ENCODE measurements at regions of chrX and their contacts with region 1.

Region 1: DNA sequence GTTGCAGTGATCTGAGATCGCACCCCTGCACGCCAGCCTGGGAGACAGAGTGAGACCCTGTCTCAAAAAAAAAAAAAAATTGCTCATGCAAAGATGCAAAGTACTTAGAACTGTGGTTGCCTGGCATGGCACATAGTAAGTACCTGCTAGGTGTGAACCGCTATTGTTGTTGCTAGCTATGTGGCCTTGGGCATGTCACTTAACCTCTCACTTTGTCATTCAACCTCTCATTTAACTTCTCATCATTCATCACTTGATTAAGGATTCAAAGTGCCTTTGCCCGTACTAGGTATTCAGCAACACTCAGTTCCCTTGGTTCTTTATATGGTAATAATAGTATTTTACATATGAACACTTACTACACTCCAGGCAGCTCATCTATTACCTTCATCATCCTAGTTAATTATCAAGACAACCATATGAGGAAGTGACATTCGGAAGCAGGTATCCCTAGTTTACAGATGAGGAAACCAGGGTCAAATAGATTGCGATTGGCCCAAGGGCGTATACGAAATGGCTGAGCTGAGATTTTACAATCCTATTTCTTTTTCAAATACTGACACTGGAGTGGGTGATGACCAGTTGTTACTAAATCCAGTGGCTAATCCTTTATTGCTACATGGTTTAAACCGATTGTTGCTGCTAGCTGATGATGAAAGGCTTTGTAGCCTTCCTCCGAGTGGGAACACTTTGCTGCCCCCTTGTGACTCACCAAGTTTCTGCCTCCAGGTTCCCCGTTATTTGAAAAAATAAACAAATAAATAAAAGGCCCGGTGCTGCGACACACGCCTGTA is 28.8 kb upstream of the SOWAHD start:
- DNase-seq: peak; percentile 24
- H3K4me3 ChIP-seq: no peak overlapping the region
- H3K27ac ChIP-seq: no peak overlapping the region
- H3K27me3 ChIP-seq: no peaks in the 10 kb centered on the region
- CTCF ChIP-seq: peak; percentile 64

Region 2: DNA sequence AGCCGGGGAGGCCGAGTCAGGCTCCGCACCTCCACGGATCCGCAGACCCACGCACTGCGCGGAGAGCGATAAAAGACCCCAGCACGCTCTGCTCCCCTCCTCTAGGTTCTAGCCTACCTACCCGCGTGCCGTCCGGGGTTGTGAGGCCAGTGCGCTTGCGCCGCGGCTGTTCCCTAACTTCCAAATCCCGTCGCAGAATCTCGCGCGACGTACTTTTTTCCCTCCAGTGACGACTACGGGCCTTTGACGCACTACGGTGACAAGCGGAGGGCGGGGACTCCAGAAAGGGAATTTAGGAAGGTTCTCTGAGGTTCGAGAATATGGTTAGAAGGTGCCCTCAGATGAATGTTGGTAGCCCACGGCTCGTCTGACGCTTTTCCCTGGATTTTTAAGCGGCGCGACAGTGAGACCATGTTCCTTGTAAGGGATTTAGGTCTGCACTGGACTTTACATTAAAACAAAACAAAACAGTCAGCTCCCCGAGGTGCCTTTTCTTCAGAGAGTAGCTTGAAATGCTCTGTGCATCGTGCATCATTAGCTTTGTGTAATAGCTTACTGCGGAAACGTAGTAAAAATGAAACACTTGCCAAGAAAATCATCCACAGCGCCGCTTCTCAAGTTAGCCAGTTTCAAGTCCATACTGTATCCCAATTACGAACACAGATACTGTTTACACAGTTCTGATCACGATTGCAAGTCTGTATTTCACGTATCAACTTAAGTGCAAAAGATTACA is 123.2 kb before region 1 on chrX and contains the start of gene NKRF:
- CTCF ChIA-PET with region 1: interaction called, 13 read pairs
- POLR2A ChIA-PET with region 1: no interaction called
- DNase-seq: peak; percentile 75
- H3K4me3 ChIP-seq: peak within 1 kb of the TSS; percentile 90
- H3K27ac ChIP-seq: peak within 1 kb of the TSS; percentile 85
- H3K27me3 ChIP-seq: no peaks in the 10 kb centered on the region
- CTCF ChIP-seq: no peak
- polyA plus RNA-seq, gene NKRF: 5.0 and 6.4 TPM in 2 replicates

Region 3: DNA sequence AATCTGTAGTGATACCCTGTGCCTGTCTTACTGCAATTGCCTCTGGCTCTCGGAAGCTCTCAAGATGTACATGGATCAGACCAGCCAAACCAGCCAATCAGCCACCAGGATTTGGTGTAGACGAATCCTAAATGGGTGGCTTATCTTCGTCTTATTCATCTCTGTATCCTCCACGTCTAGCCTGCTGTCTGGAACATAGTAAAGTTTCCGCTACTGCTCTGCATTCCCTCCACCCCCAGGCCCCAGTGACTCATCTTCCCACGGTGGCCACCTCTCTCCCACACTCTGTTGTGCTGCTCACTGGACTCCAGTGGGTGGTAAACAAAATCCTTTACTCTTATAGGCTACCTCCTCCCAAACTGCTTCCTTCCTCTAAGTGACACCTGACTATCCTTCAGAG is 74.5 kb before region 1 on chrX:
- CTCF ChIA-PET with region 1: interaction called, 10 read pairs
- POLR2A ChIA-PET with region 1: no interaction called
- DNase-seq: peak; percentile 29
- H3K4me3 ChIP-seq: no peak overlapping the region
- H3K27ac ChIP-seq: no peak overlapping the region
- H3K27me3 ChIP-seq: no peaks in the 10 kb centered on the region
- CTCF ChIP-seq: no peak

Region 4: DNA sequence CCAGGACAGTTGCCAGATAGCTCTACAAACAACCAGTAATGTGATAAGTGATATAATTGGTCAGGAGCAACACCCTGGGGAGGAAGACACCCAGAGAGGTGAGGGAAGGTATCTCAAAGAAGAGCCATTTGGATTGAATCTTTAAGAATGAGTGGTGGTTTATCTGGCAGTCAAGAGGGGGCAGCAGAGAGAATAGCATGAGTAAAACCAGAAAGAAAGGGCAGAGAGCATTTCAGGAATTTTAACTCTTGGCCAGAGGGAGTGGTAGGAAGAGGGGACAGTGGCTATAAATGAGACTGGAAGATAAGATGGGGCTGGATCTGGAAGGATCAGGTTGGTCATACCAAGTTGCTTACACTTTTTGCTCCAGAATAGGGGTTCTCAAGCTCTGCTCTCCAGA is 30.8 kb before region 1 on chrX:
- CTCF ChIA-PET with region 1: interaction called, 10 read pairs
- POLR2A ChIA-PET with region 1: interaction called, 4 read pairs
- DNase-seq: no peak
- H3K4me3 ChIP-seq: no peak overlapping the region
- H3K27ac ChIP-seq: no peak overlapping the region
- H3K27me3 ChIP-seq: no peaks in the 10 kb centered on the region
- CTCF ChIP-seq: peak; percentile 66

Measured in AG04450 (cell line).